ENCODE measurements at regions of chr11 and their contacts with region 1.

Region 1: DNA sequence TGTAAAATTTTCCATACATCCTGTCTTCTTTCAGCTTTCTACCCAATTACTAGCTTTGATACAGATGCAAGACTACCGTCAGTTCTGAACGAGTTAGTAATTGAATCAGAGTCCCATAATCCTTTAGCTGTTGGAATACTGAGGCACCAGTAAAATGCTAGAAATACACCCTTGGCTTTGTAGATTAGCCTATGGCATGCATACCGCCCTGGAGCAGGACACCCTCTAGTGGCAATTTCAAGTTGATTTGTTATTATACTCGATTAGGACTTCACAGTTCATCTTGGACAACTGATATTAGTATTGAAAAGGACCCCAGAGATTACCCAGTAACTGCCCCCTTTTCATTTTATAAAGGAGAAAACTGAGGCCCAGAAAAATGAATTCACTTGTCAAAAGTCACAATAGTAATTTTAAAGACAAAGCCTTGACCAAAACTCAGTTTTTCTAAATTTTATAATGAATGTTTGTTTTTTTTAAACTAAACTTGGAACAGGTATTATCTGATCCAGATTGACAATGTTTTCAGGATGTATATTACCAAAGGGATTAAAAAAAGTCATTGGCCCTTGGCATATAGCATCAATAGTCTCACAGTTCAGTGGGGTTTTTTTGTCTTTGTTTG is 72.6 kb downstream of the HIPK3 start:
- DNase-seq: peak; percentile 92
- H3K4me3 ChIP-seq: no peak overlapping the region
- H3K27ac ChIP-seq: no peak overlapping the region
- H3K4me1 ChIP-seq: peaks cover 15% of the 10 kb centered on the region
- H3K27me3 ChIP-seq: no peaks in the 10 kb centered on the region
- CTCF ChIP-seq: peak; percentile 99

Region 2: DNA sequence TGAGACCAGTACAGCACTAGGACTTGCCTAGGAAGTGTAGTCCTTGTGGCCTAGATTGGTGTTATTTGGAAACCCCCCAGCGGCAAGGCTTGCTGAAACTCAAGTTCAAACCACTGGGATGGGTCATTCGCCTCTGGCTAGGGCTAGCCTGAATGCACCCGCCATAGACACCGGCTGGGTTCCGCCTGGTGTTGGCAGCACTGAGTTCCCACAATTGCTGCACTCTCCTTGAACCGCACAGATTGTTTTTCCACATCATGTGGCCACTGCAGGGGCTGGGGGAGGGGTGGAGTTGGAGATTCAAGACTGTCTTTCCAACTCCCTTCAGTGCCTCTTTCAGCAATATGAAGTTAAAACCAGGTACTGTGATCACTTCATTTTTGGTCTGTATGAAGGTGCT is 578.4 kb before region 1 on chr11:
- CTCF ChIA-PET with region 1: no interaction called
- POLR2A ChIA-PET with region 1: interaction called, 10 read pairs
- intact Hi-C with region 1: loop called (anchors 10 kb)
- DNase-seq: no peak
- H3K4me3 ChIP-seq: no peak overlapping the region
- H3K27ac ChIP-seq: no peak overlapping the region
- H3K4me1 ChIP-seq: no peaks in the 10 kb centered on the region
- H3K27me3 ChIP-seq: peaks cover 8% of the 10 kb centered on the region
- CTCF ChIP-seq: no peak

Region 3: DNA sequence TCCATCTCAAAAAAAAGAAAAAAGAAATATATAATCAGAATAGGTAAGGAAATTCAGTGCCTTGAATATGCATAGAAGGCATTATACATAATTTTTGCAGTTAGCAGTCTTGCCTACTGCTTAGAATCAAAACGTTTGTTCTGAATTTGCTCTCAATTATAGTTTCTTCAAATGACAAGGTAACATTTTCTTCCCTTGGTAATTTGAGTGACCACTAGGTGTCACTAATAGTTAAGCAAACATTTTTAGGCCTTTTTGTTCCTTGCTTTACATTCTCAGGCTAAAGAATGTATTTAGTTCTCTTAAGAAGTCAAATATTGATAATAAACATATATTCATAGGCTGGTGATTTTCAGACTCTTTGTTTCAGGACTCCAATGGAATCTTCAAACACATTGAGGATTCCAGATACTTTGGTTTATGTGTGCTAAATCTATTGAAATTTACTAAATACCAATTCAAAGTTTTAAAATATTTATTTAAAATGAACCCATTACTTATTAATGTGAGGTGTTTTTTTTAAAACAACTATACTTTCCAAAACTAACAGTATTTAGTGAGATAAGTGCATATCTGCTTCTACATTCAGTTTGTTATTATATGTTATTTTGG is 369.2 kb before region 1 on chr11:
- CTCF ChIA-PET with region 1: no interaction called
- POLR2A ChIA-PET with region 1: no interaction called
- intact Hi-C with region 1: loop called (anchors 5 kb)
- DNase-seq: peak; percentile 87
- H3K4me3 ChIP-seq: no peak overlapping the region
- H3K27ac ChIP-seq: no peak overlapping the region
- H3K4me1 ChIP-seq: no peaks in the 10 kb centered on the region
- H3K27me3 ChIP-seq: no peaks in the 10 kb centered on the region
- CTCF ChIP-seq: peak; percentile 96

Region 4: DNA sequence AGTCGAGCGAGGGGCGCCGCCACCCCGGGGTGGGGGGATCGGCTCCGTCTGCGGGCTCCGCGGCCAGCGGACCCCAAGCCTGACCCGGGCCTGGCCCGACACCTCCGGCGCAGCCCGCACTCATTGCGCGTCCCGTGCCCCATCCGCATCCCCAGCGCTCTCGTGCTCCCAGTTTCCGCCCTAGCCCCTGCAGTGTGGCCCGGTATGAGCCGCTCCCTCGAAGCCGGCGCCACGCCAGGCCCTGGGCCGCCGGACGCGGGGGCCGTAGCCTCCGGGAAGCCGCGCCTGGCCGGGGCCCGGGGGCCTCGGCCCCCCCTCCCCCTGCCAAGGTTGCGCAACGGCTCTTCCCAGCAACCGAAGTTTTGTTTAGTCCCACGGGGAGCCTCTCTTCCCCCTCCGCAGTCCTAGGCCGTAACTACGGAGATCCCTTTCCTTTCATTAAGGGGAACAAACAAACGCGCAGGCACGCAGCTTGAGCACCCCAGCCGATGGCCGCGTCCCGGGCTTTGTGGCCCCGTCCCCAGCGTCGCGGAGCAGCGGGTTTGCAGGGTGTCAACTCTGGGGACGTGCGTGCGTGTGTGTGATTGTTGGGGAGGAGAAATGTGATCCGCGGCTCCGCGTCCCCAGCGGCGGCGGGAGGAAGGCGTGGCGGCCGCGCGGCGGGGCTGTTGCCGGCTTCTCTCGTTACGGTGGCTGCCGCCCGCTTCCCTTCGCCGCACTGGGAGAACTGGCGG is 71.8 kb before region 1 on chr11:
- CTCF ChIA-PET with region 1: no interaction called
- POLR2A ChIA-PET with region 1: no interaction called
- intact Hi-C with region 1: loop called (anchors 5 kb)
- DNase-seq: peak; percentile 97
- H3K4me3 ChIP-seq: peak overlapping the region; percentile 66
- H3K27ac ChIP-seq: peak overlapping the region; percentile 97
- H3K4me1 ChIP-seq: peaks cover 35% of the 10 kb centered on the region
- H3K27me3 ChIP-seq: no peaks in the 10 kb centered on the region
- CTCF ChIP-seq: peak; percentile 58; the same call in 1 of the 2 replicates